ENCODE measurements at regions of chr19 and their contacts with region 1.

Region 1: DNA sequence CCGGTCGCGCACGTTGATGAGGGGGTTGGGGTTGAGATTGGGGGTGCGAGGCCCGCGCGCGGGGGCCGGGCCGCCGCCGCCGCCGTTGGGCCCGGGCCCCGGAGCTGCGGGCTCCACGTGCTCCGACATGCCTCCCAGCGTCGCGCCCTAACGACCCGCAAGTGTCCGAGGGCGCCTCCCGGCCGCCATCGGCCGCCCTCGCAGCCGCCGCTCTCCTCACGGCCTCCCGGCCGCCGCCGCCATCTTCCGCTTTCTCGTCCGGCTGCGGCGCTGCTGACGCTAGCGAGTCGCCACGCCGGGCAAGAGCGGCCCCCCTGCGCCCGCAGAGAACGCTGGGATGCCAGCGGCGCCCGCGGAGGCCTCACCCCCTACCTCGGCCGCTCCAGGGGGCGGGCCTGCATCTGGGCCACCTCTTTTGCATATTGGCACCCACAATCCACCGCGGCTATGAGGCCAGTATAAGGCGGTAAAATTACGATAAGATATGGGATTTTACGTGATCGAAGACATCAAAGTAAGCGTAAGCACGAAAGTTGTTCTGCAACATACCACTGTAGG is at the start of gene TMEM259:
- DNase-seq: peak; percentile 96
- H3K4me3 Mint-ChIP-seq: peak within 1 kb of the TSS; percentile 95
- H3K27ac Mint-ChIP-seq: peak within 1 kb of the TSS; percentile 99
- H3K4me1 Mint-ChIP-seq: peaks cover 30% of the 10 kb centered on the region
- H3K27me3 Mint-ChIP-seq: peaks cover 2% of the 10 kb centered on the region
- total RNA-seq, gene TMEM259: 162 and 170 TPM in 2 replicates

Region 2: GRCh38 chr19:796692-797527 is 224.0 kb before region 1 on chr19 and contains the start of gene PTBP1:
- intact Hi-C with region 1: loop called (anchors 1 kb)
- DNase-seq: peak; percentile 99
- H3K4me3 Mint-ChIP-seq: peak within 1 kb of the TSS; percentile 92
- H3K27ac Mint-ChIP-seq: peak within 1 kb of the TSS; percentile 91
- H3K4me1 Mint-ChIP-seq: peaks cover 19% of the 10 kb centered on the region
- H3K27me3 Mint-ChIP-seq: no peaks in the 10 kb centered on the region
- total RNA-seq, gene PTBP1: 735 and 829 TPM in 2 replicates

Region 3: GRCh38 chr19:984165-984967 is 36.6 kb before region 1 on chr19 and contains the start of gene WDR18:
- intact Hi-C with region 1: loop called (anchors 2 kb)
- DNase-seq: peak; percentile 89
- H3K4me3 Mint-ChIP-seq: peak within 1 kb of the TSS; percentile 96
- H3K27ac Mint-ChIP-seq: peak within 1 kb of the TSS; percentile 91
- H3K4me1 Mint-ChIP-seq: no peaks in the 10 kb centered on the region
- H3K27me3 Mint-ChIP-seq: peaks cover 5% of the 10 kb centered on the region
- total RNA-seq, gene WDR18: 105 and 108 TPM in 2 replicates

Region 4: DNA sequence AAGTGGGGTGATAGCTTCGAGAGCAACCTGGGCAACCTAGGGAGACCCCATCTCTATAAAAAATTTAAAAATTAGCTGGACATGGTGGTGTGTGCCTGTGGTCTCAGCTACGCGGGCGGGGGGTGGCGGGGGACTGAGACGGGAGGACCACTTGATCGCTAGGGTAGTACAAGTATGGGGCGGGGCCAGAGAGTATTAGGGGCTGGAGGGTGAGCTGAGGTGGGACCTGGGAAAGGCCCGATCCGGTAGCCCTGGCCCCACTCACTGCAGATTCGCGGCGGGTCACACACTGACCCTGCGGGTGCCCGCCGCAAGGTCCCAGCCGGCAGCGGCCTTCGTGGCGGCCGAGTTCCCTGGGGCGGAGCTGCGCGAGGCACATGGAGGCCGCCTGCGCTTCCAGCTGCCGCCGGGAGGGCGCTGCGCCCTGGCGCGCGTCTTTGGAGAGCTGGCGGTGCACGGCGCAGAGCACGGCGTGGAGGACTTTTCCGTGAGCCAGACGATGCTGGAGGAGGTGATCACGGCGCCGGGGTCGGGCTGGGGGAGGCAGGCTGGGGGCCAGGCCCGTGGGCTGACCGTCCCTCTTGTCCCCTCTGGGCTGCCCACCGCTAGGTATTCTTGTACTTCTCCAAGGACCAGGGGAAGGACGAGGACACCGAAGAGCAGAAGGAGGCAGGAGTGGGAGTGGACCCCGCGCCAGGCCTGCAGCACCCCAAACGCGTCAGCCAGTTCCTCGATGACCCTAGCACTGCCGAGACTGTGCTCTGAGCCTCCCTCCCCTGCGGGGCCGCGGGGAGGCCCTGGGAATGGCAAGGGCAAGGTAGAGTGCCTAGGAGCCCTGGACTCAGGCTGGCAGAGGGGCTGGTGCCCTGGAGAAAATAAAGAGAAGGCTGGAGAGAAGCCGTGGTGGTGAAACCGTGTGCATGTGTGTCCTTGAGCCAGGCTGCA is 44.0 kb after region 1 on chr19:
- intact Hi-C with region 1: loop called (anchors 1 kb)
- DNase-seq: peak; percentile 72
- H3K4me3 Mint-ChIP-seq: peak overlapping the region; percentile 67
- H3K27ac Mint-ChIP-seq: peak overlapping the region; percentile 74
- H3K4me1 Mint-ChIP-seq: peaks cover 15% of the 10 kb centered on the region
- H3K27me3 Mint-ChIP-seq: no peaks in the 10 kb centered on the region

Region 5: GRCh38 chr19:1103708-1104310 is 82.9 kb after region 1 on chr19 and contains the start of gene GPX4:
- intact Hi-C with region 1: loop called (anchors 1 kb)
- DNase-seq: peak; percentile 96
- H3K4me3 Mint-ChIP-seq: peak within 1 kb of the TSS; percentile 80
- H3K27ac Mint-ChIP-seq: peak within 1 kb of the TSS; percentile 90
- H3K4me1 Mint-ChIP-seq: peaks cover 30% of the 10 kb centered on the region
- H3K27me3 Mint-ChIP-seq: peaks cover 2% of the 10 kb centered on the region
- total RNA-seq, gene GPX4: 236 and 241 TPM in 2 replicates

Region 6: GRCh38 chr19:1189419-1189818 is 168.5 kb after region 1 on chr19:
- intact Hi-C with region 1: loop called (anchors 5 kb)
- DNase-seq: peak; percentile 56
- H3K4me3 Mint-ChIP-seq: peak overlapping the region; percentile 46
- H3K27ac Mint-ChIP-seq: peak overlapping the region; percentile 83
- H3K4me1 Mint-ChIP-seq: peaks cover 34% of the 10 kb centered on the region
- H3K27me3 Mint-ChIP-seq: no peaks in the 10 kb centered on the region

Region 7: DNA sequence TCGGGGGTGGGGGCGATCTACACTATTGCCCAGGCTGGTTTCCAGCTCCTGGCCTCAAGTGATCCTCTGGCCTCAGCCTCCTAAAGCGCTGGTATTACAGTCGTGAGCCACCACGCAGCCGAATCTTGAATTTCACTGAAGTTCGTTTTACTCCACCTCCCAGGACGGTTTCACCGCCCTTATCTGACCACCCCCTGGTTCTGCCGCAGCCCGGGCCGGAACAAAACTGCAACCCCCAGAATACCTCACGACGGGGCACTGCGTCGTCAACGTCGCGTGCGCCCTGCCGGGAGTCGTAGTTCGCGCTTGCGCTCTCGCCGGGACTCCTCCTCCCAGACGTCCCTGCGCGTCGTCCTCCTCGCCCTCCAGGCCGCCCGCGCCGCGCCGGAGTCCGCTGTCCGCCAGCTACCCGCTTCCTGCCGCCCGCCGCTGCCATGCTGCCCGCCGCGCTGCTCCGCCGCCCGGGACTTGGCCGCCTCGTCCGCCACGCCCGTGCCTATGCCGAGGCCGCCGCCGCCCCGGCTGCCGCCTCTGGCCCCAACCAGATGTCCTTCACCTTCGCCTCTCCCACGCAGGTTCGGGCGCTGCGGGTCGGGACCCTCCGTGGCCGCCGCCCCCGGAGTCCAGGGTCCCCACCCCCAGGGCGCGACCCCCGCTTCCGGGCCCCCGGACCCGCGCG is 220.6 kb after region 1 on chr19 and contains the start of gene ATP5F1D:
- intact Hi-C with region 1: loop called (anchors 1 kb)
- DNase-seq: peak; percentile 91
- H3K4me3 Mint-ChIP-seq: peak within 1 kb of the TSS; percentile 91
- H3K27ac Mint-ChIP-seq: peak within 1 kb of the TSS; percentile 84
- H3K4me1 Mint-ChIP-seq: peaks cover 27% of the 10 kb centered on the region
- H3K27me3 Mint-ChIP-seq: peaks cover 16% of the 10 kb centered on the region
- total RNA-seq, gene ATP5F1D: 234 and 239 TPM in 2 replicates

Measured in activated T-helper 1 cell treated with anti-CD3 and anti-CD28 coated beads, Interleukin-12 subunit alpha, Interleukin-12 subunit beta, Interleukin-2, Interleukin-4 antibody, amounts not matched to agents 30 ng/mL and 10 ng/mL and 1 ng/mL, durations not matched to agents 14 hours and 24 hours and 36 hours (primary cell).